ENCODE measurements at regions of chr20 and their contacts with region 1.

Region 1: DNA sequence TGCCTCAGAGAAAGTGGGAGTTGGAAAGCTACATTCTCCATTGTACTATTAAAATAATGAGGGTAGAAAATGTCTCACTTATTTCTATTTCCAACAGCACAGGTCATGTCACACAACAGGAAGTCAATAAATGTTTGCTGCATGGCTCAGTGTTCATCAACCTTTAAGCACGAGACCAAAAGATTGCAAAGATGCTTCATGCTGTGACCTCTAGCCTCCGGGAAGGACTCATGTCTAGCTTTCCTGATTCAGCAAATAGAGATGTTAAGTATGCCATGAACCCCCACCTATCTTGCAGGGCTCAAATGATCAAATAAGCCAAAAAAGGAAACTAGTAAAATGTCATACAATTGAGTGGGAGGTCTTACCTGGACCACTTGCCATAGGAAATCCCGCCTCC is 57.4 kb downstream of the NCOA6 start:
- DNase-seq: no peak
- H3K27ac ChIP-seq: no peak overlapping the region
- CTCF ChIP-seq: no peak

Region 2: DNA sequence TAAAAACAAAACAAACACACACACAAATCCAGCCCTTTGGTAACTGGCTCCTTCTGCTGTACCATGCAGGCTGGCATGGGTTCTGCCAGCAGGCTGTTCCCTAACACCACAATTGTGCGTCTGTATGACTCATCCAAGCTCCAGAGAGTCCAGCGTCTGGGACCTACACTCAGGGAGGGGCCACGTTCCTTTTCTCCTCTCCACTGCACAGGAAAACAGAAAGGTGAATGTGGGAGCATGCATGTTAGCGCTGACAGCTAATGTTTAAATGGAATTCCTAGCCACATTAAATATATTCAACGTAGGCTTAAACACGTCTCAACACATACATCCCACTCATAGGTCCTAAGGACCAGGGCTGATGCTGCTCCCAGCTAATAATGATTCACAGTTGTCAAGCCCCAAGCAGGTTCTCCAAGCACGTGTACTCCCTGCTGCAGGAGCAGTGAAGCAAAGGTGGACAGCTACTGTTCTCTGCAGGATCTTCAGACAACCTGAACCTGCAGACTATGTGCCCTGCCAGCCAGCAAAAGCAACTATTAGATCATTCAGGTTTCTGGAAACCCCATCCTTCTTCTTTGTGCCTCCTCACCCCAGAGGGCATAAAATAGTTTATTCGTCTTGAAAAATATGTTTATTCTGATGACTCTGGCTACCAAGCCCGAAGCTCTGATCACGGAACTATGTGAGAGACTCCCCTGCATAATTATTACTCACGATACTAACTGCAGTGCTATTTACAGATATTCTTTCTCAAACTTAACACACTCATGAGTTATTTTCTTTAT is 188.7 kb before region 1 on chr20:
- CTCF ChIA-PET with region 1: interaction called, 17 read pairs
- POLR2A ChIA-PET with region 1: no interaction called
- DNase-seq: peak; percentile 94
- H3K27ac ChIP-seq: peak overlapping the region; percentile 66
- CTCF ChIP-seq: peak; percentile 95

Region 3: DNA sequence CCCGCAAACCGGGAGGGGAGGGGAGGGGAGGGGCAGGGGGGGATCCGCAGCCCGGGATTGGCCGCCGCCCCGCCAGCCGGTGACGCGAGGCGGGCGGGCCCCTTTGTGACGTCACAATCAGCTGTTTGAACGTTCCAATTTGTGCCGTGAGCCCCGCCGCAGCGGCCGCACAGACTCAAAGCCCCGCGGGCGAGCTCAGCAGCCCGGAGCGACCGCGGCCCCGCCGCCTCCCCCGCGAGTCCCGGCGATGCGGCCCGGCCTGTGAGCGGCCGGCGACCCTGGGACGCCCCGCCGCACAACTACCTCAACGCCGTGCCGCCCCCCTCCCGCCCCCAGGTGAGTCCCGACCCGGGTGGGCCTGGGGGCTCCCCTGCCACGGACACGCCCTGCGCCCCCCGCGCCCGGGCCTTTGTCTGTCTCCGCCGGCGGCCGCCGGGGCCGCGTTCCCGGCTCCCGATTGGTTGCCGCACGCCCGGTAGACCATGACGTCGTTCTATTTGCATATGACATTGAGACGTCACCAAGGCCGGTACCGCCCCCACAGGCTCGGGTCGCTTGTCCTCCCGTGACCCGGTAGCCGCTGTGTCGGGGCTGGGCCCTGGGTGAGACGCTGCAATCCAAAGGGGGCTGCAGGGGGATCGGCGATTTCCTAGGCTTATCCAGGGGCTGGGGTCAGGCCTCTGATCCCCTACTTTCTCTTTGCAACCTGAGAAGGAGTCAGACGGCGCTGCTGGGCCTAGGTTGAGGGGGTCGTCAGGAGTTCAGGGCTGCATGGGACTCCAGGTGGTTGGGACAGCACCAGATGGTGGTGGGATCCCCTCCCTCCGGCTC is 63.7 kb before region 1 on chr20 and contains the start of gene TP53INP2:
- CTCF ChIA-PET with region 1: interaction called, 12 read pairs
- POLR2A ChIA-PET with region 1: no interaction called
- DNase-seq: peak; percentile 94
- H3K27ac ChIP-seq: peak within 1 kb of the TSS; percentile 89
- CTCF ChIP-seq: no peak

Region 4: DNA sequence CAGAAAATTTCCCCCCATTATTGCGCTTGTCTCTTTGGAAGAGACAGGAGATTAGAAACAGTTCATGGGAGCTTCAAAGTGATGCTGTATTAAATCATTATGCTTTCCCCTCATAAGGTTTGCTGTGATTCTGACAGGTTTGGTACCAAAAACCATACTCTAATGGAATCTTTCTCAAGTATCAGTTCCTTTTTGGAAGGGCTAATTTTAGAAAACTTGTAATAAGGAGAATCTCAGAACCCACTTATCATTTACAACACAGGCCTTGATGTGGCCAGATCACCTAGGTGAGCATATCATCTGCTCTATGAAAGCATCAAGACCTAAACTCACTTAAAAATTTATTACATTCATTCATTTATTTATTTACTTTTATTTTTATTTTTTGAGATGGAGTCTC is 12.7 kb before region 1 on chr20:
- CTCF ChIA-PET with region 1: interaction called, 12 read pairs
- POLR2A ChIA-PET with region 1: no interaction called
- DNase-seq: no peak
- H3K27ac ChIP-seq: no peak overlapping the region
- CTCF ChIP-seq: no peak

Region 5: DNA sequence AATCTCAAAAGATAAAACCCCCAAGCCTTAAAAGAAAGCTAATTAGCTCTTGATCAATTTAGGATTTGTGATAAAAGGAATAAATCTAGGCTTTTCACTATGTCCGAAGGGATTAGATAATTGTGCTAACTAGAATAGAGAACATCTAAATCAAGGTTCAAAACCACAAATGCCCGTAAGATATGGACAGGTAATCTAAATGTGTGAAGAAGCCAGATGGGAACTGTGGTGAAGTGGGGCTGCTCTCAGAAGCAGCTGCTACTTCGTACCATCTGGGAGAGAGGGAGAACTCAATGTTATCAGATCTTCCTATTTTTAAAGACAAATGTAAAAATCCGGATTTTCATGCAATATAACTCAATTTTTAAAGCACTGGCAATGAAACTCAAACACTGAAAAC is 13.1 kb after region 1 on chr20:
- CTCF ChIA-PET with region 1: interaction called, 15 read pairs
- POLR2A ChIA-PET with region 1: no interaction called
- DNase-seq: no peak
- H3K27ac ChIP-seq: no peak overlapping the region
- CTCF ChIP-seq: no peak